Activated CD8-positive, alpha-beta T cell treated with anti-CD3 and anti-CD28 coated beads for 36 hours (primary cell): ENCODE measurements at regions of chr3 and their contacts with region 1.

Region 1: DNA sequence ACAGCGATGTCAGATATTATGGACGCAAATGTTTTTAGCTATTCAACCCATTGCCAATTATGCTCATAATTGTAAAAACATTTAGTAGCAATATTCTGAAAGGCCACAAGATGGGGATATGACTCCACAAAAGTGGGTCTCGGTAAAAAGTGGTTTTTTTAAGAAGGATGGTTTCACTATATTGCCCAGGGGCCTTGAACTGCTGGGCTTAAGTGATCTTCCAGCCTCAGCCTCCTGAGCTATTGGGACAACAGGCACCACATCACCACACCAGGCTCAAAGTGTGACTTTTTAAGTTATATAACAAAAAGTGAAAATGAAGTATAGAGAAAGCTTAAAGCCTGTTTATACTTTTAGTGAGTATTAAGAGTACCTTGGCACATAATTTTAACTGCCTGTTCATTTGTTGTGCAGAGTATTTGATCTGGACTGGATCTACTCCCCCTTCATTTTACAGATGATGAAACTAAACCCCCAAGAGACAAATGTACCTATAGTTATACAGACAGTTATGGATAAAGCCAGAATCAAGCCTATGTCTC is 9.4 kb downstream of the NAA50 start:
- DNase-seq: peak; percentile 8
- ATAC-seq: peak; percentile 87
- H3K4me3 Mint-ChIP-seq: no peak overlapping the region
- H3K27ac Mint-ChIP-seq: peak overlapping the region; percentile 82
- H3K4me1 Mint-ChIP-seq: peaks cover 62% of the 10 kb centered on the region
- H3K27me3 Mint-ChIP-seq: no peaks in the 10 kb centered on the region
- CTCF ChIP-seq: peak; percentile 63

Region 2: GRCh38 chr3:113721636-113722035 is 15.0 kb before region 1 on chr3:
- CTCF ChIA-PET with region 1: interaction called, 20 read pairs
- POLR2A ChIA-PET with region 1: no interaction called
- intact Hi-C with region 1: no loop called
- DNase-seq: no peak
- ATAC-seq: no peak
- H3K4me3 Mint-ChIP-seq: no peak overlapping the region
- H3K27ac Mint-ChIP-seq: peak overlapping the region; percentile 36
- H3K4me1 Mint-ChIP-seq: peaks cover 30% of the 10 kb centered on the region
- H3K27me3 Mint-ChIP-seq: no peaks in the 10 kb centered on the region
- CTCF ChIP-seq: no peak

Region 3: GRCh38 chr3:113754494-113755159 is 18.0 kb after region 1 on chr3:
- CTCF ChIA-PET with region 1: interaction called, 15 read pairs
- POLR2A ChIA-PET with region 1: no interaction called
- intact Hi-C with region 1: no loop called
- DNase-seq: no peak
- ATAC-seq: no peak
- H3K4me3 Mint-ChIP-seq: no peak overlapping the region
- H3K27ac Mint-ChIP-seq: no peak overlapping the region
- H3K4me1 Mint-ChIP-seq: peaks cover 22% of the 10 kb centered on the region
- H3K27me3 Mint-ChIP-seq: no peaks in the 10 kb centered on the region
- CTCF ChIP-seq: no peak

Region 4: GRCh38 chr3:113802795-113803455 is 66.3 kb after region 1 on chr3:
- CTCF ChIA-PET with region 1: interaction called, 12 read pairs
- POLR2A ChIA-PET with region 1: no interaction called
- intact Hi-C with region 1: no loop called
- DNase-seq: no peak
- ATAC-seq: no peak
- H3K4me3 Mint-ChIP-seq: no peak overlapping the region
- H3K27ac Mint-ChIP-seq: peak overlapping the region; percentile 30
- H3K4me1 Mint-ChIP-seq: peaks cover 5% of the 10 kb centered on the region
- H3K27me3 Mint-ChIP-seq: no peaks in the 10 kb centered on the region
- CTCF ChIP-seq: no peak

Region 5: GRCh38 chr3:113838631-113839209 is 102.1 kb after region 1 on chr3 and contains the start of gene GRAMD1C:
- CTCF ChIA-PET with region 1: interaction called, 15 read pairs
- POLR2A ChIA-PET with region 1: no interaction called
- intact Hi-C with region 1: loop called (anchors 5 kb)
- DNase-seq: peak; percentile 91
- ATAC-seq: peak; percentile 100
- H3K4me3 Mint-ChIP-seq: peak within 1 kb of the TSS; percentile 75
- H3K27ac Mint-ChIP-seq: no peak within 1 kb of the TSS
- H3K4me1 Mint-ChIP-seq: peaks cover 9% of the 10 kb centered on the region
- H3K27me3 Mint-ChIP-seq: no peaks in the 10 kb centered on the region
- CTCF ChIP-seq: peak; percentile 71
- total RNA-seq, gene GRAMD1C: 0.29 to 0.61 TPM

Region 6: GRCh38 chr3:113873814-113874526 is 137.4 kb after region 1 on chr3:
- CTCF ChIA-PET with region 1: no interaction called
- POLR2A ChIA-PET with region 1: no interaction called
- intact Hi-C with region 1: no loop called
- DNase-seq: no peak
- ATAC-seq: no peak
- H3K4me3 Mint-ChIP-seq: no peak overlapping the region
- H3K27ac Mint-ChIP-seq: no peak overlapping the region
- H3K4me1 Mint-ChIP-seq: no peaks in the 10 kb centered on the region
- H3K27me3 Mint-ChIP-seq: peaks cover 2% of the 10 kb centered on the region
- CTCF ChIP-seq: no peak

Region 7: DNA sequence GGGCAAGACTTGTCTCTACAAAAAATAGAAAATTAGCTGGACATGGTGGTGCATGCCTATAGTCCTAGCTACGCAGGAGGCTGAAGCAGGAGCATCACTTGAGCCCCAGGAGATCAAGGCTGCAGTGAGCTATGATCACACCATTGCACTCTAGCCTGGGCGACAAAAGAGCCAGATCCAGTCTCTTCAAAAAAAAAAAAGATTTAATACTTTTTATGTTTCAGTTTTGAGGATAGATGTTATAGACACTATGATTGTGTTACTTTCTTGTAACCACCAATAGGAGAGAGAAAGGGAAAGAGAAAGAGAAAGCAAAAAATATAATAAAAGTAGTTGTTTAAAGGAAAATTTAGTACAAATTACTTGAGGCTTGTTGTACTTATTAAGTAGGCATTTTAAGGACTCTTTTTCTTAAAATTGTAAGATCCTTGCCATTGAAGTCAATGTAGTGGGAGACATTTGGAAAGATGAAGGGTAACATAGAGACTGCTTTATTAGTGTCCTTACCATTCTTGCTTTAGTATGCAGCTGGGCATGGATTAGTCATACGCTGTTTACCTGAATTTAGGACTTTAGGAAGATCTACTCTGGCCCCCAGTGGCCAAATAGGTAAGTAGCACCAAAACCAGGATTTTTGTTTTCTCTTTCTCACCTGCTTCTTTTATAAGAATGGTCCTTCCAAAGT is 176.1 kb after region 1 on chr3:
- CTCF ChIA-PET with region 1: interaction called, 14 read pairs
- POLR2A ChIA-PET with region 1: no interaction called
- intact Hi-C with region 1: loop called (anchors 5 kb)
- DNase-seq: peak; percentile 58
- ATAC-seq: peak; percentile 97
- H3K4me3 Mint-ChIP-seq: no peak overlapping the region
- H3K27ac Mint-ChIP-seq: no peak overlapping the region
- H3K4me1 Mint-ChIP-seq: peaks cover 2% of the 10 kb centered on the region
- H3K27me3 Mint-ChIP-seq: no peaks in the 10 kb centered on the region
- CTCF ChIP-seq: peak; percentile 70